Mammary epithelial cell (primary cell): ENCODE measurements at regions of chr2 and their contacts with region 1.

Region 1: GRCh38 chr2:85266146-85267041 is 61.4 kb downstream of the TGOLN2 start:
- DNase-seq: peak; percentile 33
- H3K4me3 ChIP-seq: no peak overlapping the region
- H3K27ac ChIP-seq: no peak overlapping the region
- H3K4me1 ChIP-seq: peaks cover 28% of the 10 kb centered on the region
- H3K27me3 ChIP-seq: no peaks in the 10 kb centered on the region
- CTCF ChIP-seq: peak; percentile 88 to 95

Region 2: GRCh38 chr2:85076618-85077274 is 189.6 kb before region 1 on chr2:
- CTCF ChIA-PET with region 1: interaction called, 21 read pairs
- dilution Hi-C with region 1: no loop called
- in situ Hi-C with region 1: no loop called
- intact Hi-C with region 1: no loop called
- DNase-seq: no peak
- H3K4me3 ChIP-seq: no peak overlapping the region
- H3K27ac ChIP-seq: no peak overlapping the region
- H3K4me1 ChIP-seq: no peaks in the 10 kb centered on the region
- H3K27me3 ChIP-seq: no peaks in the 10 kb centered on the region
- CTCF ChIP-seq: no peak

Region 3: DNA sequence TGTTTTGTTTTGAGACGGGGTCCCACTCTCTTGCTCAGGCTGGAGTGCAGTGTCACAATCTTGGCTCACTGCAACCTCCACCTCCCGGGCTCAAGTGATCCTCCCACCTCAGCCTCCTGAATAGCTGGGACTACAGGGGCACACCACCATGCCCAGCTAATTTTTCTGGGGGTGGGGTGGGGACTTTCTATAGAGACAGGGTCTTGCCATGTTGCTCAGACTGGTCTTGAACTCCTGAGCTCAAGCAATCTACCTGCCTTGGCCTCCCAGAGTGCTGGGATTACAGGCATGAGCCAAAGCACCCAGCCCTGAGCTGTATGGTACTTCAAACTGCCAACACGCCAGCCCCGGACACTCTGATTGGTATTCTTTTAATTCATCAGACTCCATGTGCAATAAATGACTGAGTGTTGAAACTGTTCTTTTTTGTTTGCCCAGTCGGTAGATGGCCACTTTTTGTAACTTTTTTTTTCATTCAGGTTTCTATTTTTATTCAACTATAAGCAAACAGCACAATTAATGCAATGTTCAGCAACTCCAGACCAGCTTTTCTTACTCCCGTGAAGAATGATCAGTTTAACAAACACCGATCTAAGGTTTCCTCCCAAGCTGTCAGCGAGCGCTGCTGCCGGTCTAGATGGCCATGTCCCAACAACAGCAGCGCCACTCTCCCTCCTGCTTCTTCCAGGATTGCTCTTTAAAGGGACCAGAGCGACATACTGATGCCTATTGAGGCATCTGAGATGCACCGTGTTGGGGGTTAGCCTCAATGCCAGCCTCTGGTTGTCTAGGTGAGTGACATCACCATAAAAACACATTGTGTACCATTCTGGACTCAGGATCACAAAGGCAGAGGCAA is 73.9 kb after region 1 on chr2:
- CTCF ChIA-PET with region 1: no interaction called
- dilution Hi-C with region 1: no loop called
- in situ Hi-C with region 1: no loop called
- intact Hi-C with region 1: no loop called
- DNase-seq: no peak
- H3K4me3 ChIP-seq: no peak overlapping the region
- H3K27ac ChIP-seq: no peak overlapping the region
- H3K4me1 ChIP-seq: no peaks in the 10 kb centered on the region
- H3K27me3 ChIP-seq: no peaks in the 10 kb centered on the region
- CTCF ChIP-seq: no peak